Sigmoid colon (tissue), 7 donors: ENCODE measurements at regions of chr6 and their contacts with region 1.

Region 1: GRCh38 chr6:89352278-89353117 is at the start of gene UBE2J1:
- DNase-seq: peak; percentile 97
- H3K4me3 ChIP-seq: peak within 1 kb of the TSS; percentile 65 to 92 (median 72)
- H3K27ac ChIP-seq: peak within 1 kb of the TSS; percentile 94 to 99 (median 94)
- H3K4me1 ChIP-seq: peaks cover 0 to 40% (median 36%) of the 10 kb centered on the region in 4 donors
- H3K27me3 ChIP-seq: no peaks in the 10 kb centered on the region
- CTCF ChIP-seq: no peak
- EP300 ChIP-seq: no peak
- POLR2A ChIP-seq: peak; percentile 65 to 78
- total RNA-seq, gene UBE2J1: 29.5 to 36.7 (median 33.8) TPM

Region 2: DNA sequence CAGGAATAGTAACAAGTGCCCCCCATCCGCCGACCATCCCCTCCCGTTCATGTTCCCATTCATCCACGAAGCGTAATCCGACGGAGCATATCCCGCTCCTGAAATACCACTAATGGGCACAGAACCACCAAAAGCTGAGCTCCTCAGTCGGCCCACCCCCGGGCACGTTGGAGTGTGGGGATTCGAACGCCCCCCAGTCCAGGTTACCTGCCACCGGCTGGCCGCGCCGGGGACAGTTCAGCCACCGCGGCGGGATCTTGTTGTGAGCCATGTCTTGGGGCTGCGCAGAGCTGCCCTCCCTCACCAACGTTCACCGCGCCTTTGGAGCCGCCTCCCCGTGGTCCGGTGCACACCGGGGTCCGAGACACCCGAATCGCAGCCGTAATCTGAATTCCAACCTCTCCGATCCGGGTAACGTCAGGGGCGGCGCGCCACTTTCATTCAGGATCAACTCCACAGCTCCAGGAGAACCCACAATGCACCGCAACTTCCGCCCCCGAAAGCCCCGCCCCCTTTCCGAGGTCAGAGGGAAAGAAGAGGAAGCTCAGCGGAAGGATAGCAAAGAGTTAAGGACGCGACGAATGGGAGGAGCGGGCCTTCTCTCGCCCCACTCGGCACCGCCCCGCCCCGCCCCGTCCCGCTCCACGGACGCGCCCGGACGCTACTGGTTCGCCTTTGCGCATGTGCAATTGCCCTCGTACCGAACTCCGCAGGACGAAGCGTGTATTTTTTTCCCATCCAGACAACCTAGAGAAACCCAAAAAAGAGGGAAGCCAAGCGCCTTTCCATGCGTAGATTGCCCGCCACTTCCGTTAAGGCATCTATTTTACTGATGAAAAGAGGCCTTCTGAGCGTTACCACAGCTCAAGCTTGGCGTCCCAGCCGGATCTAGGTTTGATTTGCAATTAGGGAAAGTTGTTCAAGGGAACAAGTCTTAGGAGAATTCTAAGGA is 389.1 kb before region 1 on chr6 and contains the start of gene RNGTT:
- intact Hi-C with region 1: loop called (anchors 1 kb)
- DNase-seq: peak; percentile 99
- H3K4me3 ChIP-seq: peak within 1 kb of the TSS; percentile 87 to 93 (median 90)
- H3K27ac ChIP-seq: peak within 1 kb of the TSS; percentile 87 to 89 (median 87)
- H3K4me1 ChIP-seq: peaks cover 0 to 26% (median 21%) of the 10 kb centered on the region in 4 donors
- H3K27me3 ChIP-seq: no peaks in the 10 kb centered on the region
- CTCF ChIP-seq: no peak
- EP300 ChIP-seq: peak in 1 of 4 donors; percentile 70
- POLR2A ChIP-seq: peak in 1 of 2 donors; percentile 40
- total RNA-seq, gene RNGTT: 10.0 to 14.7 (median 12.9) TPM

Region 3: DNA sequence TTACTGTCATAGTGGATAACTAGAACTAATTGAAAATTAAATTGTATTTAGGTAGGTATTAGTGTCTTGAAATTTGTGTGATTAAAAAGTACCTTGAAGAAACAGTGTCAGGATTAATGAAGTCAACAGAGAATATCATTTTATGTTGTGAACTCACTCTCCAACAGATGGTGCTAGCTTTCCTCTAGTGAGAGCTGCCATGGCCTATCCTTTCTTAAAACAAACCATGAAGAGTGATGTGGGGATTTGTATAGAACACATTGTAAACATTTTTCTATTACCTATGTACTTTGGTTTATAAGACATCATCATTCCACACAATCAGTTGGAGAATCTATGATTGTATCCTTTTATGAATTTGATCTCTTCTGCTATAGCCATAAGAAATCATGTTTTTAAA is 229.9 kb before region 1 on chr6:
- intact Hi-C with region 1: loop called (anchors 5 kb)
- DNase-seq: no peak
- H3K4me3 ChIP-seq: no peak overlapping the region
- H3K27ac ChIP-seq: peak overlapping the region in 1 of 4 donors; percentile 28
- H3K4me1 ChIP-seq: peaks cover 0 to 8% (median 3%) of the 10 kb centered on the region in 4 donors
- H3K27me3 ChIP-seq: no peaks in the 10 kb centered on the region
- CTCF ChIP-seq: peak in 3 of 4 experiments; percentile 20 to 56 (median 34)
- EP300 ChIP-seq: no peak
- POLR2A ChIP-seq: no peak

Region 4: DNA sequence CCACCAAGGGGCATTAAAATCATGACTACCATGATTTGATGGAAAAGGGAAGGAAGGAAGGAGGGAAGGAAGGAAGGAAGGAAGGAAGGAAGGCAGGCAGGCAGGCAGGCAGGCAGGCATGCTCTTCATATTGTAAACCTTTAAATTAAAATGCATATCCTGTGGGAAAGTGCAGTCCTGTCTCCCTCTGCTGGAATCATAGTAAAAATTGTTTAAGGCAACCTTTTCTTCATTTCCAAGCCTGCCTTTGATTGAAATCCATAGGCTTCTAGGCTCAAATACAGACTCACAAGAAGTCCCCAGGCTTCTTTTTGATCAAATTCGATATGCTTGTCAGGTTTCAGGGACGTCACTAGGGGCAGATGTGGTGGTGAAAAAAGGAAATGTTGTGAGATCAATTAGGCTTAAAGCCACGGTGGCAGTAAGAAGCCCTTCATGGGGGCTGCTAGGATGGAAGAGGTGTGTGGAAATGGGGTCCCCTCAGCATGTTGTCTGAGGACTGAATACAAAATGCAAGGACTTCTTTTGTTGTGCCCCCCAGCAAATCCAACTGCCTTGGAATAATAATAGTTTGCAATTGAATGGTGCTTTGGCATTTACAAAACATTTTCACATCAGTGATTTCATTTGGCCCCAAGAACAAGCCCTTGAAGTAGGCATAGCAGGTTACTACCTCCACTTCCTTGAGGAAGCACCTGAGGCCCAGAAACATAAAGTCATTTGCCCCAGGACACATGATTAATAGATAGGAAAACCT is 109.7 kb before region 1 on chr6:
- intact Hi-C with region 1: no loop called
- DNase-seq: no peak
- H3K4me3 ChIP-seq: no peak overlapping the region
- H3K27ac ChIP-seq: peak overlapping the region in 1 of 4 donors; percentile 6
- H3K4me1 ChIP-seq: peaks cover 0 to 8% (median 0%) of the 10 kb centered on the region in 4 donors
- H3K27me3 ChIP-seq: no peaks in the 10 kb centered on the region
- CTCF ChIP-seq: peak; percentile 35 to 70 (median 64)
- EP300 ChIP-seq: no peak
- POLR2A ChIP-seq: no peak

Region 5: GRCh38 chr6:89339565-89339964 is 12.9 kb before region 1 on chr6:
- intact Hi-C with region 1: no loop called
- DNase-seq: no peak
- H3K4me3 ChIP-seq: no peak overlapping the region
- H3K27ac ChIP-seq: no peak overlapping the region
- H3K4me1 ChIP-seq: peaks cover 0 to 8% (median 0%) of the 10 kb centered on the region in 4 donors
- H3K27me3 ChIP-seq: no peaks in the 10 kb centered on the region
- CTCF ChIP-seq: no peak
- EP300 ChIP-seq: no peak
- POLR2A ChIP-seq: no peak

Region 6: DNA sequence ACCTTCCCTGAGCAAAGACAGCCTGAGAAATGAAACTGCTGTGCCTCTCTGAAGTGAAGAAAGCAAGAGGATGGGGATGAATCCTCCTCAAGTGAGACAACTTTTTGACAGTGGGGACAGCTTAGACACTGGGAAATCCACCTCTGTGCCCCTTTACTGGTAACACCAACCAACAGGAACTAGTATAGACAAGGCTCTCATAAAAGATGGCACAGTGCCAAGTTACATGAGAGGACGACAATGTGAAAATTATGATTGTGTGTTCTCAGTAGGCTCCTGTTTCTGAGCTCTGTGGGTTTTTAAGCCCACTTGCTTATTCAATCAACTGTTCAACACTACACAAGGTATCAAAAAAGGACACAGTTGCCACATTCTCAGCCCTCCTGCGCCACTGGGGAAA is 327.7 kb after region 1 on chr6:
- intact Hi-C with region 1: no loop called
- DNase-seq: no peak
- H3K4me3 ChIP-seq: no peak overlapping the region
- H3K27ac ChIP-seq: no peak overlapping the region
- H3K4me1 ChIP-seq: peaks cover 0 to 5% (median 0%) of the 10 kb centered on the region in 4 donors
- H3K27me3 ChIP-seq: no peaks in the 10 kb centered on the region
- CTCF ChIP-seq: no peak
- EP300 ChIP-seq: no peak
- POLR2A ChIP-seq: no peak